Left lung (tissue), 14 donors: ENCODE measurements at regions of chr20 and their contacts with region 1.

Region 1: GRCh38 chr20:32652739-32653526 is 20.8 kb downstream of the C20orf203 start:
- DNase-seq: peak; percentile 72 to 94 (median 82)
- ATAC-seq: peak; percentile 99
- H3K4me3 ChIP-seq: no peak overlapping the region
- H3K27ac ChIP-seq: no peak overlapping the region
- H3K4me1 ChIP-seq: peaks cover 0 to 23% of the 10 kb centered on the region in 2 donors
- H3K27me3 ChIP-seq: no peaks in the 10 kb centered on the region
- CTCF ChIP-seq: peak; percentile 93 to 96

Region 2: GRCh38 chr20:32521780-32522525 is 131.0 kb before region 1 on chr20:
- intact Hi-C with region 1: loop called in 1 of 2 experiments (anchors 5 kb)
- DNase-seq: peak; percentile 68 to 84 (median 78)
- ATAC-seq: peak; percentile 92
- H3K4me3 ChIP-seq: no peak overlapping the region
- H3K27ac ChIP-seq: no peak overlapping the region
- H3K4me1 ChIP-seq: peaks cover 4 to 41% of the 10 kb centered on the region in 2 donors
- H3K27me3 ChIP-seq: no peaks in the 10 kb centered on the region
- CTCF ChIP-seq: peak; percentile 73 to 90

Region 3: DNA sequence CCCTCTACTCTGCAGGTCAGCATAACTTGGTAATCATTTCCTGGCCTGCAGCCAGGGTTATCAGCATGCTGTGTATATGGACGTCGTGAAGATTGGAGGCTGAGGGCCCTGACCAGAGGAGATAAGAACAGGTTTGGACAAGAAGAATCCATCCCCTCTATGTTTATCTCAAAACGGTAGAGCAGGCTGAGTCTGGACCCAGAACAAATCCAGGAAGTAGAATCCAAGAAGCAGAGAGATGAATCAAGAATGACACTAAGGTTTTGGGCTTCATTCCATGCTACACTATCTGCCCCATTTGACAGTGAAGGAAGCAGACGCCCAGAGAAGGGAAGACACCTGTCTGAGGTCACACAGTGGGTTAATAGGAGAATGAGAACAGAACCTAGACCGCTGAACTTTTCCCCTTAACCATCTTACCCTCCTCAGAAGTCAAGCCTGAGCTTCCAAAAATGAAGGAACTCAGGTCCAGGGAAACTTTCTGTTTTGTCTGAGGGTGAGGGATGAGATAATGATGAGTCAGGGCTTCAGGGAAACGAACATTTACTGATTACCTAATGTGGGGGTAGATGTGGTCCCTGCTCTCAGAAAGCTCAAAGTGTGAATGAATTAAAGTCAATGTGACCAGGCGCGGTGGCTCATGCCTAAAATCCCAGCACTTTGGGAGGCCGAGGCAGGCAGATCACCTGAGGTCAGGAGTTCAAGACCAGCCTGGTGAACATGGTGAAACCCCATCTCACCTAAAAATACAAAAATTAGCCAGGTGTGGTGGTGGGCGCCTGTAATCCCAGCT is 99.7 kb after region 1 on chr20:
- intact Hi-C with region 1: no loop called
- DNase-seq: no peak
- ATAC-seq: no peak
- H3K4me3 ChIP-seq: no peak overlapping the region
- H3K27ac ChIP-seq: no peak overlapping the region
- H3K4me1 ChIP-seq: no peaks in the 10 kb centered on the region
- H3K27me3 ChIP-seq: no peaks in the 10 kb centered on the region
- CTCF ChIP-seq: no peak